ENCODE measurements at regions of chr1 and their contacts with region 1.

Region 1: DNA sequence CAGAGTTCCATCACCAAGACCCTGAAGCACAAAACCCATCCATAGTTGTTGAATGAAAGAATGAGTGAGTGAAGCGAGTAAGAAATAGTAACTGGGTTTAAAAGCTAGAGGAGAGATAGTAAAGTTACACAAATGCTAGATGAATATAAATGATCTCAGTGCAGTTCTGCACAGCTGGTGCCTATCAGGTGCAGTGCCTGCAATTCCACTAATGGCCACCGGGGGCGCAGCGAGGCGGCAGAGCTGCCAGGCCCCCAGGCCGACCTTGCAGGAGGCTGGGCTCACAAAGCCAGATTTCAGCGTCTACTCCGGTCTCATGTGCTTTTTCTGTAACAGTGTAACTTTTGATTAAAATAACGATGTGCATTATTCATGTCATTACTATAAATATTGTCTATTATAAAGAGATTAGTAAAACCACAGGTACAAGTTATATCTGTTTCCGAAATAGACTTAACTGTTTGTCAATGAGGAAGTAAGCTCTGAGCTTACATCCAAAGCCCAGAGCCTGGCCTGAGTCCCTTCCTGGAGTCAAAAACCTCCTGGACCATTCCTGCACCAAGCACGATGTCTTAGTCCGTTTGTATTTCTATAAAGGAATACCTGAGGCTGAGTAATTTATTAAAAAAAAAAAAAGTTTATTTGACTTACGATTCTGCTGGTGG is 477.6 kb downstream of the NPHP4 start:
- DNase-seq: peak; percentile 48 to 84 (median 64)
- ATAC-seq: peak; percentile 38
- H3K4me3 ChIP-seq: no peak overlapping the region
- H3K4me3 Mint-ChIP-seq: no peak overlapping the region
- H3K27ac ChIP-seq: no peak overlapping the region
- H3K27ac Mint-ChIP-seq: no peak overlapping the region
- H3K4me1 ChIP-seq: no peaks in the 10 kb centered on the region
- H3K4me1 Mint-ChIP-seq: peaks cover 7% of the 10 kb centered on the region
- H3K27me3 ChIP-seq: peaks cover 0 to 3% of the 10 kb centered on the region in 2 experiments
- H3K27me3 Mint-ChIP-seq: peaks cover 11% of the 10 kb centered on the region
- CTCF ChIP-seq: peak; percentile 100

Region 2: GRCh38 chr1:4227986-4228385 is 1286.7 kb before region 1 on chr1:
- CTCF ChIA-PET with region 1: no interaction called
- POLR2A ChIA-PET with region 1: no interaction called
- intact Hi-C with region 1: no loop called
- DNase-seq: no peak
- ATAC-seq: no peak
- H3K4me3 ChIP-seq: no peak overlapping the region
- H3K4me3 Mint-ChIP-seq: no peak overlapping the region
- H3K27ac ChIP-seq: no peak overlapping the region
- H3K27ac Mint-ChIP-seq: no peak overlapping the region
- H3K4me1 ChIP-seq: no peaks in the 10 kb centered on the region
- H3K4me1 Mint-ChIP-seq: no peaks in the 10 kb centered on the region
- H3K27me3 ChIP-seq: no peaks in the 10 kb centered on the region
- H3K27me3 Mint-ChIP-seq: peaks cover 14% of the 10 kb centered on the region
- CTCF ChIP-seq: no peak

Region 3: GRCh38 chr1:4298361-4299083 is 1216.1 kb before region 1 on chr1:
- CTCF ChIA-PET with region 1: no interaction called
- POLR2A ChIA-PET with region 1: no interaction called
- intact Hi-C with region 1: no loop called
- DNase-seq: no peak
- ATAC-seq: no peak
- H3K4me3 ChIP-seq: no peak overlapping the region
- H3K4me3 Mint-ChIP-seq: no peak overlapping the region
- H3K27ac ChIP-seq: no peak overlapping the region
- H3K27ac Mint-ChIP-seq: no peak overlapping the region
- H3K4me1 ChIP-seq: no peaks in the 10 kb centered on the region
- H3K4me1 Mint-ChIP-seq: no peaks in the 10 kb centered on the region
- H3K27me3 ChIP-seq: no peaks in the 10 kb centered on the region
- H3K27me3 Mint-ChIP-seq: peaks cover 6% of the 10 kb centered on the region
- CTCF ChIP-seq: no peak

Region 4: DNA sequence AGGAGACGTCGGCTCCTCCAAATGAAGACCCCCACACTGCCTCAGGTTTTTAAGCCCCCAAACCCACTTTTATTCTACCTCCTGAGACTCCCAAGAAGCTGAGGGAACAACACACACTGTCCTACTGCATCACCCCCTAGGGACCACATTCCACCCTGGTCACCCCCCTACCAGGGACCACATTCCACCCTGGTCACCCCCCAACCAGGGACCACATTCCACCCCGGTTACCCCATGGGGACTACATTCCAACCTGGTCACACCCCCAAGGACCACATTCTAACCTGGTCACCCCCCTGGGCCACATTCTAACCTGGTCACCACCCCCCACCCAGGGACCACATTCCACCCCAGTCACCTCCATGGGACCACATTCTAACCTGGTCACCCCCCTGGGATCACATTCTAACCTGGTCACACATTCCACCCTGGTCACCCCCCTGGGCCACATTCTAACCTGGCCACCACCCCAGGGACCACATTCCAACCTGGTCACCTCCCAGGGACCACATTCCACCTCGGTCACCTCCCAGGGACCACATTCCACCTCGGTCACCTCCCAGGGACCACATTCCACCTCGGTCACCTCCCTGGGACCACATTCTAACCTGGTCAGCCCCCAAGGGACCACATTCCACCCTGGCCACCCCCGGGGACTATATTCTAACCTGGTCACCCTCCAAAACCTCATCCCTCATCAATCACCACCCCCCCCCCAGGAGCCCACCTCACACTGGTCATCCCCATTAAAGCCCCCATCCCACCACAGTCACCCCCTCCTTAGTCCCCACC is 110.0 kb before region 1 on chr1:
- CTCF ChIA-PET with region 1: no interaction called
- POLR2A ChIA-PET with region 1: no interaction called
- intact Hi-C with region 1: no loop called
- DNase-seq: no peak
- ATAC-seq: no peak
- H3K4me3 ChIP-seq: no peak overlapping the region
- H3K4me3 Mint-ChIP-seq: no peak overlapping the region
- H3K27ac ChIP-seq: no peak overlapping the region
- H3K27ac Mint-ChIP-seq: no peak overlapping the region
- H3K4me1 ChIP-seq: peaks cover 6% of the 10 kb centered on the region
- H3K4me1 Mint-ChIP-seq: peaks cover 5% of the 10 kb centered on the region
- H3K27me3 ChIP-seq: no peaks in the 10 kb centered on the region
- H3K27me3 Mint-ChIP-seq: peaks cover 2% of the 10 kb centered on the region
- CTCF ChIP-seq: no peak

Region 5: DNA sequence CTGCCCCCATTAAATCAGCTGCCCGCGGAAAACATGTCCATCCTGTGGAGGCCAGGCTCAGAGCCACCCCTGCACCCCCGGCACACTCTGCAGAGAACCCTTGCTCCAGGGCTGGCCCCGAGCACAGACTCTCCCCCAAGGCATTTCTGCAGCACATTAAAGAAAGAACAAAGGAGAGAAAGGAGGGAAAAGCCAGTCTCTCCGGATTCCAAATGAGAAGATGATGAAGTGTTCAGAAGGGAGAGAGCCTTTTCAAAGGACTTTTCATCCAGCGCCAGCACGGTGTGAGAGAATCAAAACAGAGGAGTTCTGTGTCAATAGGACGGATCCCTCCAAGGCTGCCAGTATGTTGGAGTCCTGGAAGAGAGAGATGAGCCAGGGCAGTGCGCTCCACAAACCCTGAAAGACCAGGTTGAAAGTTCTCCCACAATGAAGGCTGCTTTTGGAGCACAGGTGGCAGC is 20.8 kb before region 1 on chr1:
- CTCF ChIA-PET with region 1: interaction called, 10 read pairs
- POLR2A ChIA-PET with region 1: no interaction called
- intact Hi-C with region 1: no loop called
- DNase-seq: no peak
- ATAC-seq: no peak
- H3K4me3 ChIP-seq: no peak overlapping the region
- H3K4me3 Mint-ChIP-seq: no peak overlapping the region
- H3K27ac ChIP-seq: no peak overlapping the region
- H3K27ac Mint-ChIP-seq: no peak overlapping the region
- H3K4me1 ChIP-seq: no peaks in the 10 kb centered on the region
- H3K4me1 Mint-ChIP-seq: no peaks in the 10 kb centered on the region
- H3K27me3 ChIP-seq: peaks cover 0 to 3% of the 10 kb centered on the region in 2 experiments
- H3K27me3 Mint-ChIP-seq: peaks cover 25% of the 10 kb centered on the region
- CTCF ChIP-seq: no peak

Region 6: DNA sequence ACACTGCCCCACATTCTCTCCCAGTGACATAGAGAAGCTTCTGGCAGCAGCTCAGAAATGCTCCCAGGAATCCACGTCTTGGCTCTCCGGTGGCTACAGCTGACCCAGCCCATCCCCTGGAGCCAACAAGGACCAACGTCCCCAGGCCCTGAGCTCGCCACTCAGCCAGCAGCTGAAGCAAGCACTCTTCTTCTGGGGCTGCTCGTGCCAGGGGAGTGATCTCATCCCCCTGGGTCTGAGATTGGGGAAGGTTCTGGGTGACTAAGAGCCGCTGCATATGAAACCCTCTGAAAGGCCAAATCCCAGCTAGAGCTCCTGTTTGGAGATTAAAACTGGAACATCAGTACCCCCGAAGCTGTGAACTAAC is 10.3 kb before region 1 on chr1:
- CTCF ChIA-PET with region 1: interaction called, 28 read pairs
- POLR2A ChIA-PET with region 1: no interaction called
- intact Hi-C with region 1: no loop called
- DNase-seq: no peak
- ATAC-seq: no peak
- H3K4me3 ChIP-seq: no peak overlapping the region
- H3K4me3 Mint-ChIP-seq: no peak overlapping the region
- H3K27ac ChIP-seq: no peak overlapping the region
- H3K27ac Mint-ChIP-seq: no peak overlapping the region
- H3K4me1 ChIP-seq: no peaks in the 10 kb centered on the region
- H3K4me1 Mint-ChIP-seq: peaks cover under 1% of the 10 kb centered on the region
- H3K27me3 ChIP-seq: no peaks in the 10 kb centered on the region
- H3K27me3 Mint-ChIP-seq: peaks cover 3% of the 10 kb centered on the region
- CTCF ChIP-seq: no peak

Region 7: DNA sequence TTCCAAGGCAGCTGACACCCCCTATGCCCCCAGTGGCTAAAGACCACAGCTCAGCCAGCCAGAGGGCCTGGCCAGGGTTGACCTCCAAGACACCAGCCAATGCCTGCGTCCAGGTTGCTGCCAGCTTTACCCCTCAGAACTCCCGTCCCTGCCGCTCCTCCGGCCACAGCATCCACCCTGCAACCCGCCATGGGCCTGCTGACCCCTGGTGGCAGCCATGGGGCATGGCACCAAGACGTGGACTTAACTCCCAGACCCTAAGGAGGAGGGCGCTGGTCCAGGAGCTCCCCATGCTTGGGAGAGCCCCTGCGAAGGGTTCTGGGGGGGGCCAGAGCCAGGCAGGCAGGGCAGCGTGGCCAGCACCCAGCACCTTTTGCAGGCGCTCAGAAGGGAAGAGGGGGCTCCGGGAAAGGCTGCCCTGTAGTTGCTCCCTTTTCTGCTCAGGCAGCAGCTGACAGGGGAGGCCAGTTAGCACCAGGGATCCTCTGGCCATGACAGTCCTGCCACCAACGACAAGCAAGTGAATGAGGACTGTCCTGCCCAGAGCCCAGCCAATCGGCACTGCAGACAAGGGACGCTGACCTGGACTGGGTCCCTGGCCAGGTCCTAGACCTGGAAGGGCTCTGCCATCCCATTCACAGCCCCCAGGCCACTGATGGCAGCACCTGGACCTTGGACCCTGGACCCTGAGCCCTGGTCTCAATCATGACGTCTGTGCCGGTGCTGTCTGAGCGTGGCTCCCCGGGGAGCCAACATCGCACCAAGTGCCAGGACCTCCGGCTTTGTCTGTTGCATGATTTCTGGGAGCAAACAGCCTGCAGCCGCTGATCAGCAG is 231.3 kb after region 1 on chr1:
- CTCF ChIA-PET with region 1: interaction called, 59 read pairs
- POLR2A ChIA-PET with region 1: no interaction called
- intact Hi-C with region 1: loop called in 1 of 2 experiments (anchors 1 kb)
- DNase-seq: peak; percentile 27 to 76 (median 60)
- ATAC-seq: peak; percentile 42
- H3K4me3 ChIP-seq: no peak overlapping the region
- H3K4me3 Mint-ChIP-seq: no peak overlapping the region
- H3K27ac ChIP-seq: no peak overlapping the region
- H3K27ac Mint-ChIP-seq: no peak overlapping the region
- H3K4me1 ChIP-seq: no peaks in the 10 kb centered on the region
- H3K4me1 Mint-ChIP-seq: peaks cover 2% of the 10 kb centered on the region
- H3K27me3 ChIP-seq: peaks cover 3 to 5% of the 10 kb centered on the region in 2 experiments
- H3K27me3 Mint-ChIP-seq: peaks cover 16% of the 10 kb centered on the region
- CTCF ChIP-seq: peak; percentile 74

Region 8: GRCh38 chr1:5915587-5916571 is 401.2 kb after region 1 on chr1:
- CTCF ChIA-PET with region 1: interaction called, 24 read pairs
- POLR2A ChIA-PET with region 1: no interaction called
- intact Hi-C with region 1: loop called (anchors 1 kb)
- DNase-seq: peak in 3 of 9 experiments; percentile 16 to 63 (median 44)
- ATAC-seq: peak; percentile 26
- H3K4me3 ChIP-seq: no peak overlapping the region
- H3K4me3 Mint-ChIP-seq: no peak overlapping the region
- H3K27ac ChIP-seq: no peak overlapping the region
- H3K27ac Mint-ChIP-seq: no peak overlapping the region
- H3K4me1 ChIP-seq: no peaks in the 10 kb centered on the region
- H3K4me1 Mint-ChIP-seq: peaks cover 4% of the 10 kb centered on the region
- H3K27me3 ChIP-seq: no peaks in the 10 kb centered on the region
- H3K27me3 Mint-ChIP-seq: no peaks in the 10 kb centered on the region
- CTCF ChIP-seq: peak; percentile 68

Region 9: GRCh38 chr1:5975133-5975880 is 460.7 kb after region 1 on chr1:
- CTCF ChIA-PET with region 1: interaction called, 18 read pairs
- POLR2A ChIA-PET with region 1: no interaction called
- intact Hi-C with region 1: loop called in 1 of 2 experiments (anchors 1 kb)
- DNase-seq: peak; percentile 21 to 65 (median 41)
- ATAC-seq: peak; percentile 69
- H3K4me3 ChIP-seq: no peak overlapping the region
- H3K4me3 Mint-ChIP-seq: no peak overlapping the region
- H3K27ac ChIP-seq: no peak overlapping the region
- H3K27ac Mint-ChIP-seq: no peak overlapping the region
- H3K4me1 ChIP-seq: no peaks in the 10 kb centered on the region
- H3K4me1 Mint-ChIP-seq: peaks cover 4% of the 10 kb centered on the region
- H3K27me3 ChIP-seq: no peaks in the 10 kb centered on the region
- H3K27me3 Mint-ChIP-seq: no peaks in the 10 kb centered on the region
- CTCF ChIP-seq: peak; percentile 37

Measured in CD8-positive, alpha-beta T cell (primary cell).